MCF 10A (cell line): ENCODE measurements at regions of chr3 and their contacts with region 1.

Region 1: GRCh38 chr3:180690061-180690460 is 10.8 kb upstream of the CCDC39 start:
- DNase-seq: no peak
- H3K4me3 Mint-ChIP-seq: peak overlapping the region; percentile 11
- H3K27ac Mint-ChIP-seq: no peak overlapping the region
- H3K4me1 Mint-ChIP-seq: peaks cover 12% of the 10 kb centered on the region
- H3K27me3 Mint-ChIP-seq: no peaks in the 10 kb centered on the region
- CTCF ChIP-seq: peak; percentile 49

Region 2: GRCh38 chr3:180782195-180782984 is 92.3 kb after region 1 on chr3:
- CTCF ChIA-PET with region 1: interaction called, 89 read pairs
- POLR2A ChIA-PET with region 1: interaction called, 6 read pairs
- intact Hi-C with region 1: loop called (anchors 1 kb)
- DNase-seq: peak; percentile 13
- H3K4me3 Mint-ChIP-seq: no peak overlapping the region
- H3K27ac Mint-ChIP-seq: no peak overlapping the region
- H3K4me1 Mint-ChIP-seq: no peaks in the 10 kb centered on the region
- H3K27me3 Mint-ChIP-seq: no peaks in the 10 kb centered on the region
- CTCF ChIP-seq: peak; percentile 40

Region 3: GRCh38 chr3:180855364-180855763 is 165.3 kb after region 1 on chr3:
- CTCF ChIA-PET with region 1: interaction called, 18 read pairs
- POLR2A ChIA-PET with region 1: no interaction called
- intact Hi-C with region 1: no loop called
- DNase-seq: peak; percentile 32
- H3K4me3 Mint-ChIP-seq: no peak overlapping the region
- H3K27ac Mint-ChIP-seq: no peak overlapping the region
- H3K4me1 Mint-ChIP-seq: no peaks in the 10 kb centered on the region
- H3K27me3 Mint-ChIP-seq: peaks cover 11% of the 10 kb centered on the region
- CTCF ChIP-seq: peak; percentile 31

Region 4: DNA sequence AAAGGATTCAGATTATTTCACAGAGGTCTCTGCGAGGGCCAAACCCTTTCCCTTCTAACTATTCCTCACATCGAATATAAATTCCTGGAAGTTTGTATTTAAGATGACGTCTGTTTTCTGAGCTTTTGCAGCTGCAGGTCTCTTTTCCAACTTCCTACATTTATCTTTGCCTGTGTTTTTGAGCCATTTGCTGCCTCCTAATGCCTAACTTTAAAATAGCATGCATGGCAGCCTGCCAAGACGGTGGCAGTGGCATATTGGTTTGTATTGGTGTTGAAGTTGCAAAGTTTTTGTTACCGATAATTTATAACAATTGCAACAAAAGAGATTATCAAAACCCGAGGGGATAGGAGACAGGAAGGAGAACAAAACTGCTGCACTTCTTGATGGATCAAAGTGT is 486.5 kb after region 1 on chr3:
- CTCF ChIA-PET with region 1: interaction called, 11 read pairs
- POLR2A ChIA-PET with region 1: interaction called, 4 read pairs
- intact Hi-C with region 1: loop called (anchors 1 kb)
- DNase-seq: peak; percentile 77
- H3K4me3 Mint-ChIP-seq: no peak overlapping the region
- H3K27ac Mint-ChIP-seq: no peak overlapping the region
- H3K4me1 Mint-ChIP-seq: peaks cover 5% of the 10 kb centered on the region
- H3K27me3 Mint-ChIP-seq: no peaks in the 10 kb centered on the region
- CTCF ChIP-seq: peak; percentile 45